ENCODE measurements at regions of chr2 and their contacts with region 1.

Region 1: DNA sequence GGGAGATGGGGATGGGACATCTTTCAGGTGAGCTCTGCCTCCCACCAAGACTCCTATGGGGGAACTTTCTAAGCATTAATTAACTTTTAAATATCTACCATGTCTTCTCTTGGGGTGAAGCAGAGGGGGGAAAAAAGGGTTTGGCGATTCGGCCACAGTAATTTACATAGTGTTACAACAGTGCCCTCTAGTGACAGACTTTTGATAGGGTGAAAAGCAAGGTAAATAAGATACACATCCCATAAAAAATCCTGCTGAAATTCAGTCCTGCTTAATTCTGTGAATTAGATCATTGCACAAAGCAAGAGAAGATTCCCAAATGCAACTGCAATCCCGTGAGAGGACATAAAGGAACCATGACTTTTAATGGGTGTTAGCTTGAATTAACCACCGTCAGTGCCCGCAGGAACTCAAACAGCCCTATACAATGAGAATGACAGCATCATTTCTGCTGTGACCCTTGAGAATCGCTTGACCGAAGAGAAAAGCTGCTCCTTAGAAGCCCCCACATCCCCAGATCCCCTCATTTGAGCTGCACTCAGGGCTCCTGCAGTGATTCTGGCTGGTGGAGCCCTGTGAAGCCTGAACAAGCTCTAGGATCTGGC is 32.8 kb downstream of the FAM124B start:
- DNase-seq: peak; percentile 37
- CTCF ChIP-seq: peak; percentile 56

Region 2: DNA sequence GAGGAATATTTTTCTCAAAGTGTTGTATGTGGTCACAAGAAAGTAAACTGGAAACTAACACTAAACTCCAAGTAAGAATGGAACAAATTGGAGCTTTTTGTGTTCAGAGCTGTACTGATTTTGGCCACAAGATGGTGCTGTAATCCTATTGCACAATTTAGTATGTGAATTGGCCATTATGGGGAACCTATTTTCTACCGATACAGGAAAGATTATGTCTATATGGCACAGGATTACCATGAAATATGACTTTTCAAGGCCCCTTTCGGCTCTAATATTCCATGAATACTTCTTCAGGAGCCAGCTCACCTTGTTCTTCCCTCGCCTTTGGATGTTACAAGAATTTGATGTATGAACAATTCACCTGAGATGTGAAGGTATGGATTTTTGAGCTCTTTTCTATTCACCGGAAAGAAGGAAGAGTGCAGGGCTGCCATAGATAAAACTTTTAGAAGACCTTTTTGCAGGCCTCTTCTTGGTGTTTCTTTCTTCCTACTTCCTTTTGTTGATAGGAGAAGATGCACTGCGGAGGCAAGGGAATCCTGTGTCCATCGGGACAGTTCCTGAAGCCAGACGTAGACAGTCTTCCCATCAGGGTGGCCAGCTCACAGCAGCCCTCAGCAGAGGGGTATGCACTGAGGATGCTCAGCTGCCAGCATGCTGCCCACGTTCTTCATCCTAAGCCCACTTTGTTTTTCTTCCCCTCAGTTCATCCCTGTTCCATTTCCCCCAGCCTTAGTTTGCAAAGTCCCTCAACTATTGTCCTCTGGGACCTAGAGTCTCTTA is 398.6 kb before region 1 on chr2:
- CTCF ChIA-PET with region 1: interaction called, 21 read pairs
- POLR2A ChIA-PET with region 1: no interaction called
- DNase-seq: peak; percentile 39
- CTCF ChIP-seq: peak; percentile 75

Region 3: GRCh38 chr2:224122542-224122941 is 246.6 kb before region 1 on chr2:
- CTCF ChIA-PET with region 1: no interaction called
- POLR2A ChIA-PET with region 1: no interaction called
- DNase-seq: no peak
- CTCF ChIP-seq: no peak

Region 4: GRCh38 chr2:224151161-224151560 is 218.0 kb before region 1 on chr2:
- CTCF ChIA-PET with region 1: no interaction called
- POLR2A ChIA-PET with region 1: no interaction called
- DNase-seq: no peak
- CTCF ChIP-seq: no peak

Region 5: GRCh38 chr2:224357098-224357901 is 11.8 kb before region 1 on chr2:
- CTCF ChIA-PET with region 1: interaction called, 20 read pairs
- POLR2A ChIA-PET with region 1: no interaction called
- DNase-seq: peak; percentile 74
- CTCF ChIP-seq: peak; percentile 68

Region 6: DNA sequence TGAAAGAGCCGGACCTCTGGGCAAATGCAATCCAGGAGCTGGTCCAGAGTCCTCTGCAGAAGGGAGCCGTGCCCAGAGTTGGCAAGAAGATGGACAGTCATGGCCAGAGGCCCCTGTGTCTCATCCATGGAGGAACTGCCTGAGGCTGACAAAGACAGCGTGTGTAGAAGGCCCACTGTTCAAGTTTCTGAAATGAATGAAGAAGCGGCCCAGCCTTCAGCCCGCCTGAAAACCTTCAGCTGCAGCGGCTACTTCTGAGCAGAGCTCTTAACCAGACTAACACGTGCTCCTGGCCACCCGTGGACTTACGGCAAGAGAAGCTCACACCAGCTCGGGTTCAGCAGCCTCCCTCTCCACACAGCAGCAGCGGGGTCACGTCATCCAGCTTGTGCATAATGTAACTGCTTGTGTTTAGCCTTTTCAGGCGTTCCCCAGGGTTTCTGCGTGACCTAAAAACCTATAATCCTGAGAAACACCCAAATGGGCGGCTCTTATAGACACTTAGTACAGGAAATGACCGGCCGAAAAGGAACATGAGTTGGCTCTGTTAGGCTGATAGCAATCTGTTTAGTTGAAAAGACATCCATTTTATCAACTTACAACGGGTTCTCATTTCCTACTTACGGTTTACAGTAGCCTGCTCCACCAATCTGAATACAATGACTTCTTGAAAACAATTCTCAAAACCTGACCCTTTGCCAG is 32.7 kb after region 1 on chr2 and contains the start of gene FAM124B:
- CTCF ChIA-PET with region 1: interaction called, 13 read pairs
- POLR2A ChIA-PET with region 1: no interaction called
- DNase-seq: no peak
- CTCF ChIP-seq: no peak

Region 7: GRCh38 chr2:224722250-224722649 is 353.1 kb after region 1 on chr2:
- CTCF ChIA-PET with region 1: no interaction called
- POLR2A ChIA-PET with region 1: no interaction called
- DNase-seq: no peak
- CTCF ChIP-seq: no peak

Measured in GM10248 (cell line).